Calu3 (cell line): ENCODE measurements at regions of chr6 and their contacts with region 1.

Region 1: DNA sequence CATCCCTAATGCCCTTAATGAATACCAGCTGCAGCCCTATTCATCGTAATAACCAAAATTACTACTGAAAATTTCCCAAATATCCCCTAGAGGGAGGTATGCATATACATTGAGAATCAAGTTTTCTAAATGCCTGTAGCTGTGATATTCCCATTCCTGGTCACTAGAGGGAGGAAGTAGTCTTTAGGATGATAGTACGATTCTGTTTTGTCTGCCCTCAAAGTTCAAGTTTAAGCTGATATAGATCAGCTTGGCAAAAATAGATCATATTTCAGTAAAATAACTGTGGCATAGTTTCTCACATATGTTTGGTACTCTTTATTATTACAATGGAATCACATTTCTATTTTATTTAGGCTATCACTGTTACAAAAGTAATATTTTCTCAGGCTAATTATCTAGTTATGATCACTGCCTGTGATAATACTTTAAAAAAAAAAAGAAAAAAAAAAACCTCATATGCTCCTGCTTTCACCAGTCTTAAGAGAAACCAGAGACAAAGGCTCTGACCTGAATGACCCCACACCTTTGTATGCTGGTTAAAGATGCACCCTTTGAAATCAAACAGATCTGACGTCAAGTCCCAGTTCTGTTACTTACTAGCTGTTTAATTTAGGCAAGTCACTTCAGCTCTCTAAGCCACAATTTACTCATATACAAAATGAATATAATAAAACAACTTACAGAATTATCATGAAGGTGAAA is 11.0 kb downstream of the TSPYL1 start:
- DNase-seq: peak; percentile 16
- H3K4me3 Mint-ChIP-seq: no peak overlapping the region
- H3K27ac Mint-ChIP-seq: no peak overlapping the region
- H3K4me1 Mint-ChIP-seq: no peaks in the 10 kb centered on the region
- H3K27me3 Mint-ChIP-seq: no peaks in the 10 kb centered on the region
- CTCF ChIP-seq: peak; percentile 78

Region 2: GRCh38 chr6:116229287-116229913 is 39.3 kb before region 1 on chr6:
- CTCF ChIA-PET with region 1: no interaction called
- intact Hi-C with region 1: no loop called
- DNase-seq: no peak
- H3K4me3 Mint-ChIP-seq: no peak overlapping the region
- H3K27ac Mint-ChIP-seq: no peak overlapping the region
- H3K4me1 Mint-ChIP-seq: no peaks in the 10 kb centered on the region
- H3K27me3 Mint-ChIP-seq: no peaks in the 10 kb centered on the region
- CTCF ChIP-seq: no peak

Region 3: GRCh38 chr6:116511404-116512110 is 242.8 kb after region 1 on chr6 and contains the start of gene CALHM5:
- CTCF ChIA-PET with region 1: interaction called, 10 read pairs
- intact Hi-C with region 1: no loop called
- DNase-seq: peak; percentile 67
- H3K4me3 Mint-ChIP-seq: no peak within 1 kb of the TSS
- H3K27ac Mint-ChIP-seq: no peak within 1 kb of the TSS
- H3K4me1 Mint-ChIP-seq: peaks cover 8% of the 10 kb centered on the region
- H3K27me3 Mint-ChIP-seq: peaks cover 17% of the 10 kb centered on the region
- CTCF ChIP-seq: no peak
- total RNA-seq, gene CALHM5: 0.05 TPM in 1 of 2 replicates, not detected in the other

Region 4: GRCh38 chr6:116561377-116562018 is 292.8 kb after region 1 on chr6:
- CTCF ChIA-PET with region 1: interaction called, 15 read pairs
- intact Hi-C with region 1: loop called (anchors 1 kb)
- DNase-seq: peak; percentile 70
- H3K4me3 Mint-ChIP-seq: no peak overlapping the region
- H3K27ac Mint-ChIP-seq: no peak overlapping the region
- H3K4me1 Mint-ChIP-seq: peaks cover 23% of the 10 kb centered on the region
- H3K27me3 Mint-ChIP-seq: peaks cover 44% of the 10 kb centered on the region
- CTCF ChIP-seq: peak; percentile 78

Region 5: GRCh38 chr6:116570856-116571682 is 302.3 kb after region 1 on chr6 and contains the start of gene RWDD1:
- CTCF ChIA-PET with region 1: interaction called, 21 read pairs
- intact Hi-C with region 1: no loop called
- DNase-seq: peak; percentile 99
- H3K4me3 Mint-ChIP-seq: peak within 1 kb of the TSS; percentile 99
- H3K27ac Mint-ChIP-seq: peak within 1 kb of the TSS; percentile 96
- H3K4me1 Mint-ChIP-seq: no peaks in the 10 kb centered on the region
- H3K27me3 Mint-ChIP-seq: peaks cover 16% of the 10 kb centered on the region
- CTCF ChIP-seq: no peak
- total RNA-seq, gene RWDD1: 22.5 and 29.5 TPM in 2 replicates

Region 6: DNA sequence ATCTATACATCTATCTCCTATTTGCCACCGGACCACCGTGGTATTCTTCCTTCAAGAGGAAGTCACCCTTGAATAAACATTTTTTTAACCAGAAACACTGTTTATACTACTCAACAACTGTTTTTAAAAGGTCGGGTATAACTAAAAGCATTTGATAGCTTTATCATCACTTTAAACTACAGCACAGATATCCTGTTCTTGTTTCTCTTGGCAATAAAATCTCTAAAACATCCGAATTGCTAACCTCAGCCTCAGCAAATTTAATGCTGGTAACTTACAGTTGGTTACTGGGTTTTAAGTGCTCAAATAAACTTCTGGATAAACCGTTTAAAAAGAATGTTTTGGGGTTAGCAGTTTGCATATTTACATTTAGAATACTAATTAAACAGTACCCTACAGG is 379.4 kb after region 1 on chr6:
- CTCF ChIA-PET with region 1: no interaction called
- intact Hi-C with region 1: loop called (anchors 2 kb)
- DNase-seq: no peak
- H3K4me3 Mint-ChIP-seq: no peak overlapping the region
- H3K27ac Mint-ChIP-seq: no peak overlapping the region
- H3K4me1 Mint-ChIP-seq: no peaks in the 10 kb centered on the region
- H3K27me3 Mint-ChIP-seq: no peaks in the 10 kb centered on the region
- CTCF ChIP-seq: no peak